ENCODE measurements at regions of chr5 and their contacts with region 1.

Region 1: GRCh38 chr5:40437452-40437861 is 242.3 kb upstream of the PTGER4 start:
- DNase-seq: peak in 4 of 5 donors; percentile 10 to 63 (median 22)
- H3K4me3 ChIP-seq: peak overlapping the region in 1 of 2 donors; percentile 17
- H3K4me3 Mint-ChIP-seq: peak overlapping the region in 5 of 8 donors; percentile 5 to 73 (median 58)
- H3K27ac ChIP-seq: peak overlapping the region; percentile 67
- H3K27ac Mint-ChIP-seq: peak overlapping the region; percentile 82 to 97 (median 94)
- H3K4me1 ChIP-seq: peaks cover 48% of the 10 kb centered on the region
- H3K4me1 Mint-ChIP-seq: peaks cover 51 to 76% (median 63%) of the 10 kb centered on the region in 4 donors
- H3K27me3 ChIP-seq: no peaks in the 10 kb centered on the region
- H3K27me3 Mint-ChIP-seq: no peaks in the 10 kb centered on the region

Region 2: DNA sequence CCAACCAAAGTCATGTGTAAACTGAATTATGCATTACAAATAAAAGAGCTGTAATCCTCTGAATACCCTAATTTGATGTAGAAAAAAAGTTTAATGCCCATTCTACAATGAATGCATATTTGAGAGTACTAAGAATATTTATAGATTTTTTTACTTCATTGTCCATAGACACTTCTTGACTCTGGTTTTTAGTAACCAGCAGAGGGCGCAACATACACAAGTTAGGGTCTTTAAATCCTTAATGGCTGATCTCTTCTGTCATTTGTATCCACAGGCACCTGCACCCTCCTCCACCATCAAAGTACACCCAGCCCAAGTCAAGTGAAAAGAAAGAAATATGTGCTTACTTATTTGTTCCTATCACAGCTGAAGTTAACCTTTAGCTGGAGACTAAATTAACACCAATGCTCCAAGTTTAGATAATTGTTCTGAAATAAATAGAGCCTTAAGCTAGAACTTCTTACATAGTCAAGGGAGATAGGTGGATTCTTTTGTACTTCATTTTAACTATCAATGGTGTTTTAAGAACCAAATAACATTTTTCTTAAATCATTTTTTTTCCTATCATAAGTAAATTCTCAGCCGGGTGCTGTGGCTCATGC is 488.5 kb before region 1 on chr5:
- CTCF ChIA-PET with region 1: interaction called, 16 read pairs
- POLR2A ChIA-PET with region 1: no interaction called
- intact Hi-C with region 1: loop called (anchors 2 kb)
- DNase-seq: peak; percentile 64 to 69 (median 66)
- H3K4me3 ChIP-seq: no peak overlapping the region
- H3K4me3 Mint-ChIP-seq: no peak overlapping the region
- H3K27ac ChIP-seq: no peak overlapping the region
- H3K27ac Mint-ChIP-seq: no peak overlapping the region
- H3K4me1 ChIP-seq: no peaks in the 10 kb centered on the region
- H3K4me1 Mint-ChIP-seq: peaks cover 0 to 5% (median 2%) of the 10 kb centered on the region in 4 donors
- H3K27me3 ChIP-seq: no peaks in the 10 kb centered on the region
- H3K27me3 Mint-ChIP-seq: no peaks in the 10 kb centered on the region

Region 3: GRCh38 chr5:40367255-40367654 is 70.2 kb before region 1 on chr5:
- CTCF ChIA-PET with region 1: interaction called, 31 read pairs
- POLR2A ChIA-PET with region 1: interaction called, 3 read pairs
- intact Hi-C with region 1: loop called (anchors 1 kb)
- DNase-seq: peak in 4 of 5 donors; percentile 34 to 39 (median 36)
- H3K4me3 ChIP-seq: no peak overlapping the region
- H3K4me3 Mint-ChIP-seq: no peak overlapping the region
- H3K27ac ChIP-seq: no peak overlapping the region
- H3K27ac Mint-ChIP-seq: peak overlapping the region in 4 of 7 donors; percentile 2 to 84 (median 70)
- H3K4me1 ChIP-seq: peaks cover 4% of the 10 kb centered on the region
- H3K4me1 Mint-ChIP-seq: peaks cover 3 to 14% (median 9%) of the 10 kb centered on the region in 4 donors
- H3K27me3 ChIP-seq: no peaks in the 10 kb centered on the region
- H3K27me3 Mint-ChIP-seq: no peaks in the 10 kb centered on the region

Region 4: GRCh38 chr5:40391642-40392041 is 45.8 kb before region 1 on chr5:
- CTCF ChIA-PET with region 1: interaction called, 14 read pairs
- POLR2A ChIA-PET with region 1: interaction called, 22 read pairs
- intact Hi-C with region 1: loop called (anchors 2 kb)
- DNase-seq: no peak
- H3K4me3 ChIP-seq: no peak overlapping the region
- H3K4me3 Mint-ChIP-seq: peak overlapping the region in 1 of 8 donors; percentile 6
- H3K27ac ChIP-seq: no peak overlapping the region
- H3K27ac Mint-ChIP-seq: peak overlapping the region in 5 of 7 donors; percentile 17 to 79 (median 63)
- H3K4me1 ChIP-seq: peaks cover 52% of the 10 kb centered on the region
- H3K4me1 Mint-ChIP-seq: peaks cover 42 to 58% (median 46%) of the 10 kb centered on the region in 4 donors
- H3K27me3 ChIP-seq: no peaks in the 10 kb centered on the region
- H3K27me3 Mint-ChIP-seq: no peaks in the 10 kb centered on the region

Region 5: GRCh38 chr5:40404613-40405012 is 32.8 kb before region 1 on chr5:
- CTCF ChIA-PET with region 1: interaction called, 111 read pairs
- POLR2A ChIA-PET with region 1: interaction called, 169 read pairs
- intact Hi-C with region 1: loop called (anchors 5 kb)
- DNase-seq: peak; percentile 50 to 68 (median 58)
- H3K4me3 ChIP-seq: no peak overlapping the region
- H3K4me3 Mint-ChIP-seq: peak overlapping the region; percentile 4 to 71 (median 37)
- H3K27ac ChIP-seq: peak overlapping the region; percentile 86
- H3K27ac Mint-ChIP-seq: peak overlapping the region; percentile 85 to 100 (median 99)
- H3K4me1 ChIP-seq: peaks cover 71% of the 10 kb centered on the region
- H3K4me1 Mint-ChIP-seq: peaks cover 49 to 90% (median 72%) of the 10 kb centered on the region in 4 donors
- H3K27me3 ChIP-seq: no peaks in the 10 kb centered on the region
- H3K27me3 Mint-ChIP-seq: no peaks in the 10 kb centered on the region

Region 6: GRCh38 chr5:40486437-40487275 is 49.2 kb after region 1 on chr5:
- CTCF ChIA-PET with region 1: no interaction called
- POLR2A ChIA-PET with region 1: no interaction called
- intact Hi-C with region 1: loop called (anchors 5 kb)
- DNase-seq: peak; percentile 51 to 83 (median 71)
- H3K4me3 ChIP-seq: no peak overlapping the region
- H3K4me3 Mint-ChIP-seq: peak overlapping the region in 6 of 8 donors; percentile 1 to 57 (median 22)
- H3K27ac ChIP-seq: no peak overlapping the region
- H3K27ac Mint-ChIP-seq: peak overlapping the region; percentile 31 to 94 (median 88)
- H3K4me1 ChIP-seq: peaks cover 19% of the 10 kb centered on the region
- H3K4me1 Mint-ChIP-seq: peaks cover 12 to 30% (median 20%) of the 10 kb centered on the region in 4 donors
- H3K27me3 ChIP-seq: no peaks in the 10 kb centered on the region
- H3K27me3 Mint-ChIP-seq: no peaks in the 10 kb centered on the region